Heart right ventricle (tissue), 16 donors: ENCODE measurements at regions of chr3 and their contacts with region 1.

Region 1: DNA sequence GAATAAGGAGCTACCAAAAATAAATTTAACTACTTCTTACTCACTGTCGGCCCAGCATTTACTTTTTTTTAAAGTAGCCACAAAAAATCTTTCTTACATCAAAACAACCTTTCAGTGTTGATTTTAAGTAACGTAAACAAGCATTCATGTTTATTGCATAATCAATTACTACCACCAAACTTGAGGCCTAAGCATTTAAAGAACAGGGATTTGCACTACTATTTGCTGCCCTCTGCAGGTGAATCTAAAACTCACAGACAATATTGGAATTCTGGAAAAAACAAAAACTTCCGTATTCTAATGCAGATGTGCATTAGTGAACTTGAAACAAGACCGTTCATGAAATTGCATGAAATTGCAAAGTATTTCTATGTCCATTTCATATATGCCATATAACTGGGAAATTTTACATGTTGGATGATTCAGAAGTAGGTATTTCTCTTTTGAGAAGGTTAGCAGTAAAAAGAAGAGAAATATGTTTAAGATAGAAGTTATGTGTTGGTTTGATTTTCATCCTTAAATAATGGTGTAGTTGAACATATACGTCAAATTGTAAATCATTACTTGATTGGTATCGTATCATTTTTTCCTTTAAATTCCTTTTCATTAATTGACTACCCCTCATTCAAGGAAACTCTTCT is 55.6 kb downstream of the CGGBP1 start:
- DNase-seq: no peak
- ATAC-seq: no peak
- H3K4me3 ChIP-seq: no peak overlapping the region
- H3K27ac ChIP-seq: no peak overlapping the region
- H3K4me1 ChIP-seq: peaks cover 0 to 13% (median 0%) of the 10 kb centered on the region in 9 donors
- H3K27me3 ChIP-seq: peaks cover 0 to 5% (median 0%) of the 10 kb centered on the region in 7 donors
- CTCF ChIP-seq: peak; percentile 29 to 81 (median 72)

Region 2: DNA sequence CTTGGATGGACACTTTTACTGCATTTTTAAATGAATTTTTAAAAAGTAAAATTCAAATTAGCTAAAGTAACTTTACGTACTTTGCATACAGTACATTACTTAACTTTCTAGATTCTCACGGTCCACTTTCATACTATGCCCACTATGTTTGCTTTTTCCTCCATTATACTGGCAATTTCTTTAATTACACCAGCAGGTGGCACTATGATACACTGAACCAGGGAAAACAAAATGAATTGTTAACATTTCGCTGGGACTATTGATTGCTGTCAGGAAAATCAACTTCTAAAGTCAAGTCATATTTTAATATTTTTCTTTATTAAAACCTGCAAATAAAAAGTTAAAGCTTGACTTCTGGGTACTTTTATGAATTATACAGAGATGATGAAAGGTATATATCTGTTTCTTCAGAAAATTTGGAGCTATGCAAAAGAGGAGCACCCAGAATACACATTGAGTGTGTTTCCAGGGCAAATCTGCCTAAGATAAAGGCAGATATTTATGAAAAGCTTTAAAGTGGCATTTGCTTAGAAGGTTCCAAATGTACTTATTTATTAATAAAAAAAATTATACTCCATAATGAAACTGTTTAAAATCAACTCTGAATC is 705.0 kb before region 1 on chr3:
- intact Hi-C with region 1: loop called in 3 of 10 experiments (anchors 5 to 10 kb)
- DNase-seq: no peak
- ATAC-seq: no peak
- H3K4me3 ChIP-seq: no peak overlapping the region
- H3K27ac ChIP-seq: no peak overlapping the region
- H3K4me1 ChIP-seq: no peaks in the 10 kb centered on the region
- H3K27me3 ChIP-seq: no peaks in the 10 kb centered on the region
- CTCF ChIP-seq: peak in 8 of 9 donors; percentile 16 to 80 (median 66)

Region 3: GRCh38 chr3:87733753-87734367 is 269.4 kb before region 1 on chr3:
- intact Hi-C with region 1: no loop called
- DNase-seq: no peak
- ATAC-seq: no peak
- H3K4me3 ChIP-seq: no peak overlapping the region
- H3K27ac ChIP-seq: no peak overlapping the region
- H3K4me1 ChIP-seq: no peaks in the 10 kb centered on the region
- H3K27me3 ChIP-seq: no peaks in the 10 kb centered on the region
- CTCF ChIP-seq: no peak

Region 4: DNA sequence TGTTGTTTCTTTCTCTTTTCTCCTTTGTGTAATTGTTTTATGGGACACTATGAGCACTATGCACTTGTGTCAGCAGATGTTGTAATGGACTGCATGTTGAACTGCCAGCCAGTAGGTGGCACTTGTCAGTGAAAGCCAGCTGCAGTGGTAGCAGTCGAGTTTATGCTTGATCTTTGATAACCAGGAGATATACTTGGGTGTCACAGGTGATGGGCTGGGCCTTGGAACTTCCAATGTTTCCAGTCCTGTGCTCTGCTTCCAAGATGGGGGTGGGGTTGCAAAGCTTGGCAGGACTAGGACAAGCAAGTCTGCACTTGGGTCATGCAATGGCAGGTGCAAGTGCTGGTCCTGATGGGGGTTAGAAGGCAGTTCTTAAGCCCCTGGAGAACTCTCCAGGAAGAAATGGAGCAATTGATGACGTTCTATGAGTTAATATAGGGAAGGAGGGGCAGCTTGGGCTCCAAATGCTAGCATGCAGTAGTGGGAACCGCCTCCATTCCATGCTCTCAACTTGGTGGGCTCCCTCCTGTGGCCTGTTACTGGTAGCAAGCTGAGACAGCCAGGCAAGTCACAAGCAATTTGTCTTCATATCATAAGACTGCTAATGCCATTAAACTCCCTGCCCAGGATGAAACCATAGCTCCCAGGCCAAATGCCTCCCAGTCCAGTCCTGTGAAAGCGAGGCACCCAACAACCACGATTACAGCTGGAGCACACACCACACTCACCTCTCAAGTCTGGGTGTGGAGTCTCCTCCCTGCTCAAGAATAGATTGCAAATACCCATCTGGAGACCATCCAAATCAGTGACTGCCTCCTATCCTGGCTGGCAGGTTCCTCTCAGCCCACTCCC is 231.7 kb before region 1 on chr3:
- intact Hi-C with region 1: loop called in 4 of 10 experiments (anchors 5 to 10 kb)
- DNase-seq: peak in 1 of 2 donors; percentile 4
- ATAC-seq: no peak
- H3K4me3 ChIP-seq: no peak overlapping the region
- H3K27ac ChIP-seq: no peak overlapping the region
- H3K4me1 ChIP-seq: no peaks in the 10 kb centered on the region
- H3K27me3 ChIP-seq: no peaks in the 10 kb centered on the region
- CTCF ChIP-seq: peak; percentile 15 to 69 (median 46)

Region 5: GRCh38 chr3:88101142-88101541 is 97.9 kb after region 1 on chr3:
- intact Hi-C with region 1: loop called in 1 of 10 experiments (anchors 10 kb)
- DNase-seq: no peak
- ATAC-seq: no peak
- H3K4me3 ChIP-seq: no peak overlapping the region
- H3K27ac ChIP-seq: no peak overlapping the region
- H3K4me1 ChIP-seq: peaks cover 0 to 13% (median 10%) of the 10 kb centered on the region in 9 donors
- H3K27me3 ChIP-seq: no peaks in the 10 kb centered on the region
- CTCF ChIP-seq: no peak

Region 6: DNA sequence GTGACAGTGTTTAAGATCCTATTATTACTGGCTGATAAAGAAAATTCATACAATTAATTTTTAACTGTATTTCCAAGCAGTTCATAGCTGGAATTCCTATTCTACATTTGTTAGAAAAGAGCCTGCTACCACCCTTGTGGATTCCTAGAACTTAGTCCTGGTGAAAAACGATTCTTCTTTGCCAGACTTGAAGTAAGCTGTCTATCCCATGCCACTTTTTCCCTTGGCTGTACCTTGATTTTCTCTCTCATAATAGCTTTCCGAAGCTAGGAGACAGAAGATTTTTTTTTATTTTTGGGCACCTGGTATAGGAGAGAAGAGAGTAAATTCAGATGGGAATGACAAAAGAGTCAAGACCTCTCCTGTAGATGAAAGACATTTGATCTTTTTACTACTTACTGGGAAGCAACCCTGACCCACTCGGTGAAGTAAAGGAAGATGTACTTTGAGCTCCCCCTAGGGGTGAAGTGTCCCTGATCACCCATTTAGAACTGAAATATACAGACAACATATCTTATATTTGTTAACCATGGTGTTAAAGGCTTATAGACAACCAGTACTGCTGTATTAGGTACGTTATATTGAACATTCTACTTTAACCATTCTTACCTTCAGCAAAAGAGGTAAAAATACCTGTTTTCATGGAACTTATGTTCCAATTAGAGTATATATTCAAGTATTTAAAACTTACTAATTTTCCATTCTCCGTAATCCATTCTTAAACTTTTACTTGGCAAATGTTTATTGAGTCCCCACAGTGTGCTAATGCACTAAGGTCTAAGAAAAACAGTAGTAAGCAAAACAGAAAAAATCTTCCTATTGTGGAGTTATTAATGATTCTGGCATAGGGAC is 110.3 kb after region 1 on chr3:
- intact Hi-C with region 1: loop called in 5 of 10 experiments (anchors 5 to 10 kb)
- DNase-seq: peak in 1 of 2 donors; percentile 74
- ATAC-seq: peak; percentile 72 to 90 (median 82)
- H3K4me3 ChIP-seq: no peak overlapping the region
- H3K27ac ChIP-seq: no peak overlapping the region
- H3K4me1 ChIP-seq: peaks cover 0 to 18% (median 5%) of the 10 kb centered on the region in 9 donors
- H3K27me3 ChIP-seq: no peaks in the 10 kb centered on the region
- CTCF ChIP-seq: peak; percentile 51 to 89 (median 77)

Region 7: DNA sequence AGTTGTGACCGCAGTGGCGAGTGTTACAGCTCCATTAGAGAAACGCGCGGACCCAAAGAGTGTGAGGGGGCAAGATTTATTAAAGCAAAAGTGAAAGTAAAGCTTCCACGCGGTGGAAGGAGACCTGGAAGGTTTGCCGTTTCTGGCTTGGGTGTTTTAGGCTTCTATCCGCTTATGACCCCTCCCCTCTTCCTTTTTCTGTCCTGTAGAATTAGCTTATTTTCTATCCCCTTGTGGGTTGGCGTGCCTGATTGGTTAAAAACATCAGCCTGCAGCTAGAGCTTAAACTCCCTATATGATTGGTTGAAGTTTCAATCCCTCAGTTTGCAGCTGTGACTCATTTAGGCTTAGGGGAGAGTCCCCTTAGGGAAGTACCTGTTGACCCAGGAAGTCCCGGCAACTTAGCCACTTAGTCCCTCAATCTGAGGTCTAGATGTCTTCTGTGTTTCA is 186.2 kb after region 1 on chr3:
- intact Hi-C with region 1: no loop called
- DNase-seq: no peak
- ATAC-seq: no peak
- H3K4me3 ChIP-seq: no peak overlapping the region
- H3K27ac ChIP-seq: no peak overlapping the region
- H3K4me1 ChIP-seq: no peaks in the 10 kb centered on the region
- H3K27me3 ChIP-seq: no peaks in the 10 kb centered on the region
- CTCF ChIP-seq: no peak